Activated naive CD8-positive, alpha-beta T cell treated with anti-CD3 and anti-CD28 coated beads, Interleukin-2, amount 10 ng/mL, durations not matched to agents 7 days and 5 days (primary cell): ENCODE measurements at regions of chr10 and their contacts with region 1.

Region 1: GRCh38 chr10:73529089-73529832 is 33.4 kb upstream of the PPP3CB start:
- DNase-seq: peak; percentile 39
- ATAC-seq: peak; percentile 95
- H3K4me3 Mint-ChIP-seq: no peak overlapping the region
- H3K27ac Mint-ChIP-seq: no peak overlapping the region
- H3K4me1 Mint-ChIP-seq: peaks cover 1% of the 10 kb centered on the region
- H3K27me3 Mint-ChIP-seq: no peaks in the 10 kb centered on the region

Region 2: GRCh38 chr10:73591935-73592699 is 62.9 kb after region 1 on chr10:
- POLR2A ChIA-PET with region 1: interaction called, 10 read pairs
- DNase-seq: no peak
- ATAC-seq: peak; percentile 61
- H3K4me3 Mint-ChIP-seq: peak overlapping the region; percentile 61
- H3K27ac Mint-ChIP-seq: peak overlapping the region; percentile 59
- H3K4me1 Mint-ChIP-seq: peaks cover 16% of the 10 kb centered on the region
- H3K27me3 Mint-ChIP-seq: no peaks in the 10 kb centered on the region